Panc1 (cell line): ENCODE measurements at regions of chr10 and their contacts with region 1.

Region 1: DNA sequence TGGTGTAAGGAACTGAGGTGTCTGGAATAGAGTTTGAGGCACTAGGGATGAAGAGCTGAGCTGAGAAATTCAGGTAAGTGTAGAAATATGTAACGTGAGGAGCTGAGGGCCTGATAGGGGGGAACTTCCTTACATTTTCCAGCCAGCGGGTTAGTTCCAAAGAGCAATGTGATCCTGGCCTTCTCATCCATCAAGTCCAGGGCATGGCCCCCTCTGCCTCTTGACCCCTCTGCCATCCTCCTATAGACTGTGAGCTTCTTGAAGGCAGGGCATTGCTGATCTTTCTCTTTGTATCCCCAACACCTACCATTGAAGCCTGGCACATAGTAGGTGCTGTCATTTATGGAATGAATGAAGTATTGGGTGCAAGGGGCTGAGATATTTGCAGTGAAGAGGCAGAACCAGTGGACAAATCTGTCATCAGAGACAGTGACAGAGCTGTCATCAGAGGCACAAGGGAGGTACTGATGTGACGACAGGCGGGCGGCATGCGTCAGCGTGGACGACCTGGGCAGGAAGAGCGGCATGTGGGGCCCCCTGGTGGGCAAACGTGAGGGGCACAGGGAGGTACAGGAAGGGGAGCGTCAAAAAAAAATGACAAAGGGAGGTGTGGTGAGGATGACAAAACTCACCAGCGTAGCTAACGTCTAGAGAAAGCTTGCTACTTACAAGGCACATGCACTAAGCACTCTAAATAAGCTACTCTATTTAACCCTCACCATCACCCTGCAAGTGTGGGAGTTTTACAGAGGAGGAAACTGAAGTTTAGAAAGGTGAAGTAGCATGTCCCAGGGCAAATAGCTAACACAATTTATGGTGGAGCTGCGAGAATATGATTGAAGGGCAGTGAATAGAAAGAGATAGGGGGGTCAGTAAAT is 5.2 kb upstream of the CAMK2G start:
- DNase-seq: peak; percentile 56
- ATAC-seq: peak; percentile 93
- H3K4me3 ChIP-seq: no peak overlapping the region
- H3K27ac ChIP-seq: peak overlapping the region; percentile 45; the same call in 1 of the 2 replicates
- H3K4me1 ChIP-seq: peaks cover 4% of the 10 kb centered on the region; the same call in 1 of the 2 replicates
- H3K27me3 ChIP-seq: no peaks in the 10 kb centered on the region
- CTCF ChIP-seq: peak; percentile 97

Region 2: GRCh38 chr10:73848821-73849489 is 30.6 kb before region 1 on chr10:
- CTCF ChIA-PET with region 1: interaction called, 11 read pairs
- POLR2A ChIA-PET with region 1: interaction called, 3 read pairs
- in situ Hi-C with region 1: no loop called
- intact Hi-C with region 1: loop called (anchors 1 kb)
- DNase-seq: peak; percentile 62
- ATAC-seq: peak; percentile 91
- H3K4me3 ChIP-seq: no peak overlapping the region
- H3K27ac ChIP-seq: no peak overlapping the region
- H3K4me1 ChIP-seq: no peaks in the 10 kb centered on the region
- H3K27me3 ChIP-seq: no peaks in the 10 kb centered on the region
- CTCF ChIP-seq: peak; percentile 99

Region 3: GRCh38 chr10:73953665-73954064 is 74.1 kb after region 1 on chr10:
- CTCF ChIA-PET with region 1: interaction called, 11 read pairs
- POLR2A ChIA-PET with region 1: interaction called, 13 read pairs
- in situ Hi-C with region 1: no loop called
- intact Hi-C with region 1: no loop called
- DNase-seq: no peak
- ATAC-seq: no peak
- H3K4me3 ChIP-seq: no peak overlapping the region
- H3K27ac ChIP-seq: no peak overlapping the region
- H3K4me1 ChIP-seq: peaks cover 15% of the 10 kb centered on the region
- H3K27me3 ChIP-seq: no peaks in the 10 kb centered on the region
- CTCF ChIP-seq: no peak

Region 4: DNA sequence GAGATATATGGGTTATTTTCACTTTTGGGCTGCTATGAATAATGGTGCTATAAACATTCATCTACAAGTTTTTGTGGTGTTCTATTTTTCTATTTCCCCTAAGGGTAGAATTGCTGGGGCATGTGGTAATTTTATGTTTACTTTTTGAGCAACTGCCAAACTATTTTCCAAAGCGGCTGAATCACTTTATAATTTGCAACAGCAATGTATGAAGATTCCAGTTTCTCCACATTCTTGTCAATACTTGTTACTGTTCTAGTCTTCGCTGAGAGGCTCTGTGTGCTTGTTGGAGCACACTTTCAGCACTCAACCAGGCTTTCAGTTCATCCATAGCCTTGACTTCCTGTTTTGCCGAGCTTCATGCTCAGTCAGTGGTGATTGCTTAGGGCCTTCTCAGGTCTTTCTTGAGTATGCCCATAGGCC is 310.5 kb after region 1 on chr10:
- CTCF ChIA-PET with region 1: no interaction called
- POLR2A ChIA-PET with region 1: interaction called, 20 read pairs
- in situ Hi-C with region 1: no loop called
- intact Hi-C with region 1: no loop called
- DNase-seq: peak; percentile 73
- ATAC-seq: peak; percentile 91
- H3K4me3 ChIP-seq: peak overlapping the region; percentile 4 to 41
- H3K27ac ChIP-seq: peak overlapping the region; percentile 91
- H3K4me1 ChIP-seq: peaks cover 49% of the 10 kb centered on the region
- H3K27me3 ChIP-seq: no peaks in the 10 kb centered on the region
- CTCF ChIP-seq: no peak